Panc1 (cell line): ENCODE measurements at regions of chr9 and their contacts with region 1.

Region 1: GRCh38 chr9:125854553-125855275 is 107.5 kb downstream of the PBX3 start:
- DNase-seq: no peak
- ATAC-seq: no peak
- H3K4me3 ChIP-seq: no peak overlapping the region
- H3K27ac ChIP-seq: no peak overlapping the region; the same call in 1 of the 2 replicates
- H3K4me1 ChIP-seq: peaks cover 13% of the 10 kb centered on the region; the same call in 1 of the 2 replicates
- H3K27me3 ChIP-seq: no peaks in the 10 kb centered on the region
- CTCF ChIP-seq: no peak

Region 2: DNA sequence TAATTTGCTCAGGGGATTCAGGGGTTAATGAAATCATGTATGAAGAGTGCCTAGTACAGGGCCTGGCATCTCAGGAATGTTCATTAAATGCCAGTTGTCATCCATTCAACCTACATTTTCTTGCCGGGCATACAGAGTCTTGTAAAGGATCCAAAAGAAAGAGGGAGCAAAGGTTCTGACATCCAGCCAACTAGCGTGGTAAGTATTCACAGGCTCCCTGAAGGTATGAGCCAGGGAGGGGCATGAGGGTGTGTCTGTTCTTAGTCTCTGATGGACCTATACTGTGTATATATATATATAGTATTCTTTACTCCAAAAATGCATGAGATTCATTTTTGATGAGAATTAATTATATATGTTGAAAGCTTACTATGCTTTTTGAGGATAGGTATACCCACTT is 94.5 kb after region 1 on chr9:
- CTCF ChIA-PET with region 1: no interaction called
- POLR2A ChIA-PET with region 1: interaction called, 10 read pairs
- in situ Hi-C with region 1: no loop called
- intact Hi-C with region 1: no loop called
- DNase-seq: no peak
- ATAC-seq: no peak
- H3K4me3 ChIP-seq: no peak overlapping the region
- H3K27ac ChIP-seq: no peak overlapping the region
- H3K4me1 ChIP-seq: no peaks in the 10 kb centered on the region
- H3K27me3 ChIP-seq: no peaks in the 10 kb centered on the region
- CTCF ChIP-seq: no peak